ENCODE measurements at regions of chr4 and their contacts with region 1.

Region 1: DNA sequence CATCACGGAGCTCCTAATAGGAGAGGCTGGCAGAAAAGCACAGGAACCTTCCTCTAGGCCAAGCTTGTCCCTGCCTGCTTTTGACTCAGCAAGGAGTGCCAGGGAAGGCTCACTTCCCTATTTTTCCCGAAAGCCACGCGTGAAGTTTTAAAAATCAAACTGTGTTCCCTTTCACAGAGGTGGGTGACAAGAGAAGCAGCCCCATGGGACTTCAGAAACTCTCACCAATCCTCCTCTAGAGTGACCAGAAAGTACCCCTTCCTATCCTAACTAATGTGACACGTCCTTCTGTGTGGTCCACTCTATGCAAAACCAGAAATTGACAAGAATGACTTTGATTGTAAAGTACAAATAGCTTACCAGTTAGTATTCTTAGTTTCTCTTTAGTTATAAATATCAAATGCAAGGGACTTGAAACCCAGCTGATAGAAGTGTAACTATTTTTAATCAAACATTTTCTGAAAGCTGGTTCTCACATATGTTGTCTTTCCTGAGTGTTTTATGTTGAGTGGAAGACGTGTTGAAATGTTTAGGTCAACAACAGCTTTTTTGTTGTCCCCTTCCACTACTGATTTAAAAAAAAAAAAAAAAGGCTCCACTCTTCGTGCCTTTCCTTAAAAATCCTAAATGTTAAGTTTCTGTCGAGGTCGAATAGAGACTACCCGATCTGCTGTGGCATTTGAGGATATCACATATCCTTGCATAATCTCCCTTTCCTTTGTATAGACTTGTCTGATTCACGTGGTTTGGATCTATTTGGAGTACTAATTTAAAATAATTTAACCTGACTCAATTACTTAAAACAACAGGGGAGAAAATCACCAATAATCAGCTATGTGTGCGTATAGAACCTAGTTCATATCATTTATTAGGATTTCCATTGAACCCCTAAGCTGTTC is 42.1 kb downstream of the NFKB1 start:
- DNase-seq: no peak
- H3K4me3 Mint-ChIP-seq: no peak overlapping the region
- H3K27ac Mint-ChIP-seq: peak overlapping the region; percentile 62
- H3K4me1 Mint-ChIP-seq: peaks cover 16% of the 10 kb centered on the region
- H3K27me3 Mint-ChIP-seq: no peaks in the 10 kb centered on the region
- CTCF ChIP-seq: no peak

Region 2: DNA sequence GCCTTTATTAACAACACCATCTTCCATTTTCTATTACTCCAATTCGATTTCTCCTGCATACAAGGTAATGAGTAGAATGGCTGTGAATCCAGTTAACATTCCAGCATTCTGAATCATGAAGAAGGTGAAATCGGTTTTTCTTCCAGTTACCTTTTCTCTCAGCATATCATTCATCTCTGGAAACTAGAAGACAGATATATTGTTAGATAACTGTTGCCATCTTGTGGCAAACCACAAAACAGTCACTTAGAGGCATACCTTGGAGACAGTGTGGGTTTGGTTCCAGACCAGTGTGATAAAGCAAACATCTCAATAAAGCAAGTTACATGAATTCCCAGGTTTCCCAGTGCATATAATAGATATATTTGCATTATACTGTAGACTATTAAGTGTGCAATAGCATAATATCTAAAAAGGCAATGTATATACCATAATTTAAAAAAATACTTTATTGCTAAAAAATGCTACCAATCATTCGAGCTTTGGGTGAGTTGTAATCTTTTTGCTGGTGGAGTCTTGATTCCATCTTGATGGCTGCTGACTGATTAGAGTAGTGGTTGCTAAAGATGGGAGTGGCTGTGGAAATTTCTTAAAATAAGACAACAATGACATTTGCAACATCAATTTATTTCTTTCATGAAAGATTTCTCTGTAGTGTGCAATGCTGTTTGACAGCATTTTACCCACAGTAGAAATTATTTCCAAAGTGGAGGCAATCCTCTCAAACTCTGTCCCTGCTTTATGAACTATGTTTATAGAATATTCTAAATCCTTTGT is 280.1 kb before region 1 on chr4:
- CTCF ChIA-PET with region 1: no interaction called
- POLR2A ChIA-PET with region 1: no interaction called
- intact Hi-C with region 1: no loop called
- DNase-seq: peak; percentile 58
- H3K4me3 Mint-ChIP-seq: no peak overlapping the region
- H3K27ac Mint-ChIP-seq: no peak overlapping the region
- H3K4me1 Mint-ChIP-seq: peaks cover 7% of the 10 kb centered on the region
- H3K27me3 Mint-ChIP-seq: no peaks in the 10 kb centered on the region
- CTCF ChIP-seq: peak; percentile 67

Region 3: DNA sequence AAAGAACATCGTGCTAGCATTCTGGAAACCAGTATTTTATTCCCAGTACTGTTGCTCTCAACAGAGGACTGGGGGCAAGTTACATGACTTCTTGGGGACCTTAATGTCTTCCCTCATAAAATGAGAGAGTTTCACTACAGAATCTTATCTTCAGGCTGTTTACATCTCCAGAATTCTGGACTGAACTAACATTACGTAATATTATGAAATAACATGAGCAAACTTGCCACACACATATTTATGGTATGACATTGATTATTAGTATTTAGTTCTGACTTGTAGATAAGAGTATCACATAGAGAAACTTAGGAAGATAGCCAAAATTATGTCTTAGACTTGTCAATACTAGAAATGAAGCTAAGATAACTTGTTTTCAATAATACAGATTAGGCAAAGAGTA is 25.9 kb after region 1 on chr4:
- CTCF ChIA-PET with region 1: interaction called, 6 read pairs
- POLR2A ChIA-PET with region 1: interaction called, 19 read pairs
- intact Hi-C with region 1: no loop called
- DNase-seq: peak; percentile 25
- H3K4me3 Mint-ChIP-seq: no peak overlapping the region
- H3K27ac Mint-ChIP-seq: peak overlapping the region; percentile 25
- H3K4me1 Mint-ChIP-seq: peaks cover 7% of the 10 kb centered on the region
- H3K27me3 Mint-ChIP-seq: no peaks in the 10 kb centered on the region
- CTCF ChIP-seq: no peak

Measured in MCF 10A (cell line).